Activated T-helper 2 cell treated with anti-CD3 and anti-CD28 coated beads, Interferon-gamma antibody, Interleukin-2, Interleukin-4, amounts not matched to agents 10 μg/mL and 5 μg/mL and 100 μg/mL, durations not matched to agents 14 hours and 24 hours and 36 hours (primary cell): ENCODE measurements at regions of chr12 and their contacts with region 1.

Region 1: GRCh38 chr12:389139-390096 is at the start of gene KDM5A:
- DNase-seq: peak; percentile 86
- H3K4me3 Mint-ChIP-seq: peak within 1 kb of the TSS; percentile 94
- H3K27ac Mint-ChIP-seq: peak within 1 kb of the TSS; percentile 95
- H3K4me1 Mint-ChIP-seq: peaks cover 24% of the 10 kb centered on the region
- H3K27me3 Mint-ChIP-seq: no peaks in the 10 kb centered on the region
- total RNA-seq, gene KDM5A: 76.4 and 77.9 TPM in 2 replicates

Region 2: GRCh38 chr12:401235-402028 is 12.0 kb after region 1 on chr12 and contains the start of gene CCDC77:
- intact Hi-C with region 1: loop called (anchors 1 kb)
- DNase-seq: peak; percentile 94
- H3K4me3 Mint-ChIP-seq: no peak within 1 kb of the TSS
- H3K27ac Mint-ChIP-seq: no peak within 1 kb of the TSS
- H3K4me1 Mint-ChIP-seq: peaks cover 4% of the 10 kb centered on the region
- H3K27me3 Mint-ChIP-seq: peaks cover 1% of the 10 kb centered on the region
- total RNA-seq, gene CCDC77: 12.5 and 14.4 TPM in 2 replicates

Region 3: DNA sequence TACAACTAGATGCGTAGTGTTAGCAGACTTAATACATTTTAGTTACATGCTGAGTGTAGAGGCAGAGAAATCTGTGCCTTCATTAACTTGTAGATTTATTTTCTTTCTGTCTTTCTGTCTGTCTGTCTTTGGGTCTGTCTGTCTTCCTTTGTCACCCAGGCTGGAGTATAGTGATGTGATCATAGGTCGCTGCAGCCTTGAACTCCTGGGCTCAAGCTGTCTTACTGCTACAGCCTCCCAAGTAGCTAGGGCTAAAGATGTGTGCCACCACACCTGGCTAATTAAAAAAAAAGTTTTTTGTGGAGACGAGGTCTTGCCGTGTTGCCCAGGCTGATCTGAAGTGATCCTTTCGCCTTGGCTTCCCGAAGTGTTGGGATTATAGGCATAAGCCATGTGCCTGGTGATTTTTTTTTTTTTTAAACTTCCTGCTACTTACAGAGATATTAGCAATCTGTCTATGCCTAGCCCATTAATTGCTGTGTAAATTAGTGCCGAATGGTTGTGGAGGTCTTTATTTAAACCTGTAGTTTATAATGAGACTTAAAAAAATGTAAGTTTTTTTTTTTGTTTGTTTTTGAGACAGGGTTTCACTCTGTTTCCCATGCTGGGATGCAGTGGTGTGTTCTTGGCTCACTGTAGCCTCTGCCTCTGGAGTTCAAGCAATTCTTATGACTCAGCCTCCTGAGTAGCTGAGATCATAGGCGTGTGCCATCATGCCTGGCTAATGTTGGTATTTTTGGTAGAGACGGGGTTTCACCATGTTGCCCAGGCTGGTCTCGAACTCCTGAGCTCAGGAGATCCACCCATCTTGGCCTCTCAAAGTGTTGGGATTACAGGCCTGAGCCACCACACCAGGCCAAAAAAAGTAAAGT is 624.4 kb after region 1 on chr12:
- intact Hi-C with region 1: no loop called
- DNase-seq: no peak
- H3K4me3 Mint-ChIP-seq: no peak overlapping the region
- H3K27ac Mint-ChIP-seq: no peak overlapping the region
- H3K4me1 Mint-ChIP-seq: no peaks in the 10 kb centered on the region
- H3K27me3 Mint-ChIP-seq: no peaks in the 10 kb centered on the region